RWPE1 (cell line): ENCODE measurements at regions of chr7 and their contacts with region 1.

Region 1: GRCh38 chr7:72321081-72321480 is 91.1 kb downstream of the CALN1 start:
- DNase-seq: peak; percentile 49
- H3K27ac ChIP-seq: no peak overlapping the region
- CTCF ChIP-seq: no peak

Region 2: GRCh38 chr7:72334066-72334465 is 13.0 kb after region 1 on chr7:
- CTCF ChIA-PET with region 1: interaction called, 4 read pairs
- POLR2A ChIA-PET with region 1: interaction called, 12 read pairs
- DNase-seq: no peak
- H3K27ac ChIP-seq: no peak overlapping the region
- CTCF ChIP-seq: no peak

Region 3: DNA sequence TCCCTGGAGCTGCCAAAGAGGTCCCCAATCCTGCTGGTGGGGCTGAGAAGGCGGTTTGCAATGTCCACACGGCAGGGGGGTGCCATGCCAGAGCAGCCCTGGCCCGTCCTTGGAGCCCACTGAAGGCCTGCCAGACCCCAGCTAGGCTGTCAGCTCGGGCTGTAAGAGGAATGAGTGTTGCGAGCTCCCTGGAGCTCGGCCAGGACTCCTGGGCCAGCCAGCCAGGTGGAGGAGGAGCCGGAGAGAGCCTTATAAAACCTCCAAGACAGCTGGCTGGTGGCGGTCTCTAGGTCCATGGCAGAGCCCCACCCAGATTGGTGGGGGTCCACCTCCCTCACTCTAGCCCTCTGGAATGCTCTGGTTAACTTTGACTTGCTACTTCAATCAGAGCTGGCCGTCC is 146.2 kb after region 1 on chr7:
- CTCF ChIA-PET with region 1: no interaction called
- POLR2A ChIA-PET with region 1: no interaction called
- DNase-seq: no peak
- H3K27ac ChIP-seq: no peak overlapping the region
- CTCF ChIP-seq: no peak

Region 4: GRCh38 chr7:72603073-72603472 is 282.0 kb after region 1 on chr7:
- CTCF ChIA-PET with region 1: no interaction called
- POLR2A ChIA-PET with region 1: no interaction called
- DNase-seq: no peak
- H3K27ac ChIP-seq: no peak overlapping the region
- CTCF ChIP-seq: no peak